GM12878 (cell line): ENCODE measurements at regions of chr6 and their contacts with region 1.

Region 1: DNA sequence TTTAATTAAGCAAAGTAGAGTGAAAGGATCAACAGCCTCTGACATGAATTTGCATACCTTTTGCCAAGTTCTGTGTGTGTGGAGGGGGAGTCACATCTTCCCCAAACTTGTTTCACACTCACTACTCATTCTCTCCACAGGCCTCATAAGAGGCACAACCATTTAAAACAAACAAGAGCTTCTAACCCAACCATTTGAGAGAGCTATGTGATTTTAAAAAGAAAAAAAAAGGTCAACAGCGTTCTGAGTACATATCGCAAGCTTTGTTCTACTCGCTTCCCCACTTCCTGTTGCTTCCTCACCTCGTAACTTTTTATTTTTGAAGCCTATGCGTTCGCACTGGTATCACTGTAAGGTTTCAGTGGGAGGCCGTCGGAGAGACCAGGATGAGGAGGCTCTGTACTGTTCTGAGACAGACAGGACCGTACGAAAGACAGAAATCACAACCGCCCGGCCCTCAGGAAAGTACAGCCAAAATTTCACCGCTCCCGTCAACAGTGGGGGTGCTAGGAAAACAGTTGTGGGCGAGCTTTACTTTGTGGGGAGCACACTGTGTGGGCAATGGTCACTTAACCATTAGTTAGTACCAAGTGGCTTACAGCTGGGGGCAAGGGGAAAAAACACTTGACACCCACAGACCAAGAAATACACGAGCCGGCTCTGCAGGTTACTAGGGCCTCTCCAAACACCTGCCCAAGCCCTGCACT is 61.3 kb downstream of the TRERF1 start:
- DNase-seq: no peak
- ATAC-seq: peak; percentile 82
- H3K4me3 ChIP-seq: peak overlapping the region; percentile 42; the same call in 1 of the 2 replicates
- H3K27ac ChIP-seq: peak overlapping the region; percentile 76
- H3K4me1 ChIP-seq: peaks cover 47% of the 10 kb centered on the region
- H3K27me3 ChIP-seq: no peaks in the 10 kb centered on the region
- CTCF ChIP-seq: no peak
- EP300 ChIP-seq: peak; percentile 32 to 42; a peak in 2 of 4 replicates
- POLR2A ChIP-seq: 0 out of 2 replicates have a peak, but pooled peaks have one; percentile 28
- RAD21 ChIP-seq: 0 out of 2 replicates have a peak, but pooled peaks have one; percentile 3

Region 2: GRCh38 chr6:42367353-42368011 is 22.9 kb before region 1 on chr6:
- CTCF ChIA-PET with region 1: interaction called, 11 read pairs
- POLR2A ChIA-PET with region 1: interaction called, 12 read pairs
- RAD21 ChIA-PET with region 1: interaction called, 54 read pairs
- SMC1A ChIA-PET with region 1: interaction called, 65 read pairs
- in situ Hi-C with region 1: no loop called
- intact Hi-C with region 1: no loop called
- DNase-seq: peak; percentile 59
- ATAC-seq: peak; percentile 92
- H3K4me3 ChIP-seq: peak overlapping the region; percentile 35; the same call in 1 of the 2 replicates
- H3K27ac ChIP-seq: peak overlapping the region; percentile 82
- H3K4me1 ChIP-seq: peaks cover 58% of the 10 kb centered on the region
- H3K27me3 ChIP-seq: no peaks in the 10 kb centered on the region
- CTCF ChIP-seq: no peak
- EP300 ChIP-seq: no peak
- POLR2A ChIP-seq: peak; percentile 52
- RAD21 ChIP-seq: no peak

Region 3: GRCh38 chr6:42402184-42402583 is 11.8 kb after region 1 on chr6:
- CTCF ChIA-PET with region 1: interaction called, 20 read pairs
- POLR2A ChIA-PET with region 1: interaction called, 8 read pairs
- RAD21 ChIA-PET with region 1: interaction called, 13 read pairs
- SMC1A ChIA-PET with region 1: interaction called, 24 read pairs
- in situ Hi-C with region 1: no loop called
- intact Hi-C with region 1: no loop called
- DNase-seq: peak; percentile 74
- ATAC-seq: peak; percentile 99
- H3K4me3 ChIP-seq: no peak overlapping the region
- H3K27ac ChIP-seq: no peak overlapping the region
- H3K4me1 ChIP-seq: peaks cover 12% of the 10 kb centered on the region
- H3K27me3 ChIP-seq: no peaks in the 10 kb centered on the region
- CTCF ChIP-seq: no peak
- EP300 ChIP-seq: peak; percentile 91 to 93
- POLR2A ChIP-seq: no peak
- RAD21 ChIP-seq: peak; percentile 28; the same call in 1 of the 2 replicates

Region 4: DNA sequence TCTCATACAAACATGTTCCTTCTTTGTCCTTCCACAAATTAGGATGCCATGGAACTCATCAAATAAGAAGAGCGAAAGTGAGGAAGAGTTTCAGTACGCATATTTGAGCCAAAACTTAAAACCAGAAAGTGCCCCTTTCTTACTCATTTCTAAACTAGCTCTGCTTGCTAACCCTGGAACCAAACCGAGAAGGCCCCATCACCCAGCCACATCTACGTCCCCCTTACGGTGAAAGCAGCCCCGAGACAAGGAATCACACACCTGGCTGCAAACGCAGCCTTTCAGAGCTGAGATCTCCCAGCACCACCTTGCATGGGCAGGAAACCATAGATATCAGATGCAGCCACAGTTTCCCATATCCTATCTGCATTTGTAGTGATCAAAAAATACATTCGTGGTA is 32.9 kb after region 1 on chr6:
- CTCF ChIA-PET with region 1: interaction called, 11 read pairs
- POLR2A ChIA-PET with region 1: interaction called, 10 read pairs
- RAD21 ChIA-PET with region 1: interaction called, 18 read pairs
- SMC1A ChIA-PET with region 1: interaction called, 25 read pairs
- in situ Hi-C with region 1: no loop called
- intact Hi-C with region 1: no loop called
- DNase-seq: peak; percentile 61
- ATAC-seq: peak; percentile 78
- H3K4me3 ChIP-seq: no peak overlapping the region
- H3K27ac ChIP-seq: no peak overlapping the region
- H3K4me1 ChIP-seq: peaks cover 52% of the 10 kb centered on the region
- H3K27me3 ChIP-seq: no peaks in the 10 kb centered on the region
- CTCF ChIP-seq: no peak
- EP300 ChIP-seq: peak; percentile 31 to 34; a peak in 1 of 4 replicates
- POLR2A ChIP-seq: no peak
- RAD21 ChIP-seq: no peak

Region 5: GRCh38 chr6:42453031-42453653 is 62.8 kb after region 1 on chr6:
- CTCF ChIA-PET with region 1: interaction called, 3 read pairs
- POLR2A ChIA-PET with region 1: interaction called, 10 read pairs
- RAD21 ChIA-PET with region 1: interaction called, 10 read pairs
- SMC1A ChIA-PET with region 1: interaction called, 13 read pairs
- in situ Hi-C with region 1: no loop called
- intact Hi-C with region 1: no loop called
- DNase-seq: peak; percentile 51
- ATAC-seq: peak; percentile 88
- H3K4me3 ChIP-seq: peak overlapping the region; percentile 85
- H3K27ac ChIP-seq: peak overlapping the region; percentile 68
- H3K4me1 ChIP-seq: peaks cover 12% of the 10 kb centered on the region
- H3K27me3 ChIP-seq: no peaks in the 10 kb centered on the region
- CTCF ChIP-seq: no peak; a peak in 1 of 6 replicates
- EP300 ChIP-seq: 0 out of 4 replicates have a peak, but pooled peaks have one; percentile 2
- POLR2A ChIP-seq: peak; percentile 77
- RAD21 ChIP-seq: peak; percentile 20; the same call in 1 of the 2 replicates

Region 6: GRCh38 chr6:42511803-42512422 is 121.5 kb after region 1 on chr6:
- CTCF ChIA-PET with region 1: interaction called, 5 read pairs
- POLR2A ChIA-PET with region 1: interaction called, 6 read pairs
- RAD21 ChIA-PET with region 1: interaction called, 24 read pairs
- SMC1A ChIA-PET with region 1: interaction called, 40 read pairs
- in situ Hi-C with region 1: no loop called
- intact Hi-C with region 1: no loop called
- DNase-seq: no peak
- ATAC-seq: no peak
- H3K4me3 ChIP-seq: no peak overlapping the region
- H3K27ac ChIP-seq: no peak overlapping the region
- H3K4me1 ChIP-seq: peaks cover 25% of the 10 kb centered on the region
- H3K27me3 ChIP-seq: no peaks in the 10 kb centered on the region
- CTCF ChIP-seq: no peak
- EP300 ChIP-seq: no peak
- POLR2A ChIP-seq: no peak
- RAD21 ChIP-seq: no peak

Region 7: GRCh38 chr6:42572523-42572922 is 182.1 kb after region 1 on chr6:
- CTCF ChIA-PET with region 1: no interaction called
- POLR2A ChIA-PET with region 1: no interaction called
- RAD21 ChIA-PET with region 1: interaction called, 11 read pairs
- SMC1A ChIA-PET with region 1: interaction called, 4 read pairs
- in situ Hi-C with region 1: no loop called
- intact Hi-C with region 1: no loop called
- DNase-seq: peak; percentile 87
- ATAC-seq: peak; percentile 95
- H3K4me3 ChIP-seq: peak overlapping the region; percentile 34; the same call in 1 of the 2 replicates
- H3K27ac ChIP-seq: peak overlapping the region; percentile 64
- H3K4me1 ChIP-seq: peaks cover 8% of the 10 kb centered on the region; the same call in 1 of the 2 replicates
- H3K27me3 ChIP-seq: no peaks in the 10 kb centered on the region
- CTCF ChIP-seq: no peak
- EP300 ChIP-seq: peak in 1 of 2 experiments; percentile 68; a peak in 2 of 4 replicates
- POLR2A ChIP-seq: no peak
- RAD21 ChIP-seq: no peak